ENCODE measurements at regions of chr15 and their contacts with region 1.

Region 1: DNA sequence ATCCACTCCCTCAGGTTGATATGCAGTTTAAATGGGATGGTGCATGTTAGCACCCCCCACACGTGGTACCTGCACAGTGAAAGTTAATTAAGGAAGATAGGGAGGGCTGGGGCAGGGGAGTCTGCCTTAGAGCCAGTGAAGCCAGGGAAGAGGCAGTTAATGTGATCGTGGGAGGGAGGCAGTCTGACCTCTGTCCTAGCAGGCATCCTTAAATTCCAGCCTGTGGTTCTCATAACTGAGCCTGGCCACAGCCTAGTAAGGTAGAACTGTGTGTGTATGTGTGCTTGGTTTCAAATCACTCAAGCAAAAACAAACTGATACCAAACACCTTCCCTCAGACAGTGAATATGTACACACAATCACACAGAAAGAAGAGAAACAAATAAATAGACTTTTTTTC is 319.1 kb upstream of the TLE3 start:
- DNase-seq: no peak
- H3K4me3 ChIP-seq: no peak overlapping the region
- H3K27ac ChIP-seq: no peak overlapping the region
- H3K4me1 ChIP-seq: no peaks in the 10 kb centered on the region
- CTCF ChIP-seq: peak; percentile 7; the same call in 1 of the 2 replicates

Region 2: GRCh38 chr15:69869881-69870505 is 546.8 kb before region 1 on chr15:
- CTCF ChIA-PET with region 1: no interaction called
- POLR2A ChIA-PET with region 1: no interaction called
- intact Hi-C with region 1: no loop called
- DNase-seq: no peak
- H3K4me3 ChIP-seq: no peak overlapping the region
- H3K27ac ChIP-seq: no peak overlapping the region
- H3K4me1 ChIP-seq: peaks cover 18% of the 10 kb centered on the region
- CTCF ChIP-seq: no peak

Region 3: DNA sequence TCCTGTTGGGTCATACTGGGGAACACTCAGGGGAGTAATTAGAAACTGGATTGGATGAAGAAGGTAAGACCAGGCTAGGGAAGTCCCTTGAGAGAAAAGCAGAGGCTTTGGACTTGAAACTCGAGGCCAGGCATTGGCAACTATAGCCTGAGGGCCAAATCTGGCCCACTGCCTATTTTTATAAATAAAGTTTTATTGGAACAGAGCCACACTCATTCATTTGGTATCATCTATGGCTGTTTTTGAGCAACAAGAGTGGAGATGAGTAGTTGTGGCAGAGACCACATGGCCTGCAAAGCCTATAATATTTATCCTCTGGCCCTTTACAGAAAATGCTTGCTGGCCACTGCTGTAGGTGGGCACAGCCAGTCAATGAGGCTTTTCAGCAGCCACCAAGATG is 45.2 kb after region 1 on chr15:
- CTCF ChIA-PET with region 1: no interaction called
- POLR2A ChIA-PET with region 1: no interaction called
- intact Hi-C with region 1: loop called (anchors 2 kb)
- DNase-seq: no peak
- H3K4me3 ChIP-seq: no peak overlapping the region
- H3K27ac ChIP-seq: no peak overlapping the region
- H3K4me1 ChIP-seq: peaks cover 21% of the 10 kb centered on the region
- CTCF ChIP-seq: no peak